ENCODE measurements at regions of chr6 and their contacts with region 1.

Region 1: DNA sequence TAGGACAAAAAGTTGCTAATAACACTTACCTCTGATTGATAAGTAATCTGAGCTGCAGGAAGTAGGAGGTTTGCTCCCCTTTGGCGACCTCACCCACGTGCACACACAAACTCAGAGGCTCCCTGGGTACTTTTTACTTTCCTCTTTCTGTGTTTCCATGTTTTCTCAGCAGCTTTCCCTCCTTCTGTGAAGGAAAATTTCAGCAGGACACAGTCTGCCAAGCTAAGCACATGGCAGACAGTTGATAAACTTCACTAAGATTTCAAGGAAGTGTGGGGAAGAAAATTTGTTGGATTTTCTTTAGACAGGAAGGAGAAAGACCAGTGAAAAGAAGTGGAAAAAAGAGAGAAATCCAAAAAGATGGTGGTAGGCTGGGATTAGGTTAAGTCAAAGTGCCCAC is 215.5 kb upstream of the ARG1 start:
- DNase-seq: no peak
- ATAC-seq: no peak
- H3K4me3 ChIP-seq: no peak overlapping the region
- H3K27ac ChIP-seq: no peak overlapping the region
- H3K4me1 ChIP-seq: no peaks in the 10 kb centered on the region
- H3K27me3 ChIP-seq: no peaks in the 10 kb centered on the region
- CTCF ChIP-seq: no peak

Region 2: DNA sequence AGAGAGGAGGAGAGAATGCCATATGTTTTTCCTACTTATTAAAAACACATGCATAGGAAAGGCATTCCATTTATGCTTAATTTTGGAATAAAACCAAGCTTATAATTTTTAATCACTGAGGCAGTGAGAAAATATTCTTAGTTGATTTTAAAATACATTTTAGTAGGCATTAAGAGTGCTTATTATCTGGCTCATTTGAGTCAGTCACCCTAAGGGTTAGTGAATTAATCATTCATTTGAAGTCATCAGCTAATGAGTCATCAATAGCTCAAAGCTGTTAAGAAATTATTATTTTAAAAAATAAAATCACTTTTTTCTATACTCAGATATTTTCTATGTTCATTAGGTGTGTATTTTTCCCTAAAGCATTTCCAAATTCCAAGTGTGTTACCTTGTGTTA is 910.1 kb before region 1 on chr6:
- CTCF ChIA-PET with region 1: no interaction called
- POLR2A ChIA-PET with region 1: no interaction called
- in situ Hi-C with region 1: no loop called
- intact Hi-C with region 1: no loop called
- DNase-seq: no peak
- ATAC-seq: no peak
- H3K4me3 ChIP-seq: no peak overlapping the region
- H3K27ac ChIP-seq: no peak overlapping the region
- H3K4me1 ChIP-seq: no peaks in the 10 kb centered on the region
- H3K27me3 ChIP-seq: no peaks in the 10 kb centered on the region
- CTCF ChIP-seq: no peak

Region 3: GRCh38 chr6:130602151-130602770 is 755.2 kb before region 1 on chr6:
- CTCF ChIA-PET with region 1: no interaction called
- POLR2A ChIA-PET with region 1: interaction called, 11 read pairs
- in situ Hi-C with region 1: no loop called
- intact Hi-C with region 1: no loop called
- DNase-seq: peak; percentile 67
- ATAC-seq: peak; percentile 84
- H3K4me3 ChIP-seq: no peak overlapping the region
- H3K27ac ChIP-seq: no peak overlapping the region
- H3K4me1 ChIP-seq: no peaks in the 10 kb centered on the region
- H3K27me3 ChIP-seq: no peaks in the 10 kb centered on the region
- CTCF ChIP-seq: no peak

Region 4: DNA sequence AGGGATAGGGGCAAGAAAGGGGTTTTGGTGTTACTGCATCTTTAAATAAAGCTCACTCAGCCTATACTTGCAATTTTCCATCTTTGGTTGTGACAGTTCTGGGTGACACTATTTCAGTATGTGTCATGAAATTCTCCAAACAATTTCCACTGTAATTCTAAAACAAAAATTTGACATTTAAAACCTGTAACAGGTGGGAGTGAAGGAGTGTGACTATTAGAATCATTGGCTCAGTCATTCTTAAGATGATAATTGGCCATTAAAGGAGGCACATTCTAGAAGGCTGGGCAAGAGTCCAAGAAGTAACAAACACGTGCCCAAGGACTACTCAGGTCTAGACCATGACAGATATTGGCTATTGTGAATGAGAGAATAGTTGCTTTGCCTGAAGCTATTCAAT is 62.2 kb after region 1 on chr6:
- CTCF ChIA-PET with region 1: no interaction called
- POLR2A ChIA-PET with region 1: no interaction called
- in situ Hi-C with region 1: no loop called
- intact Hi-C with region 1: no loop called
- DNase-seq: no peak
- ATAC-seq: no peak
- H3K4me3 ChIP-seq: no peak overlapping the region
- H3K27ac ChIP-seq: no peak overlapping the region
- H3K4me1 ChIP-seq: no peaks in the 10 kb centered on the region
- H3K27me3 ChIP-seq: peaks cover 4% of the 10 kb centered on the region; the same call in 1 of the 2 replicates
- CTCF ChIP-seq: no peak

Region 5: DNA sequence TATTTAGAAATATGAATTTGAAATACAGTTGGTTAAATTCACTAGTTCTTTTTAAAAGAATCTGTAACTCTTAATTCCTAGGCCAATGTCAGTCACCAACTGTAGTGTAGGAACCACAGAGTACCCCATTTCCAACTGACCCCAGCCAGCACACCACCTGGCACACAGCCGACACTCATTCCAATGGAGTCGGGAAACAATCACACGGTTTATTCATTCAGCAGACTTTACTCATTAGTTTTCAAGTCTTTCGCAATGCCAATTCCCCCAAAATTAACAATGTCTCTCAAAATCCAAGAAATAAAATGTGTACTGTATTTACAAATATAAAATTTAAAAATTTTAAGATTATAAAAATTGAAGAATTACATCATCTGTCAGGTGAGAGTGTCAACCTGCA is 229.0 kb after region 1 on chr6:
- CTCF ChIA-PET with region 1: no interaction called
- POLR2A ChIA-PET with region 1: no interaction called
- in situ Hi-C with region 1: no loop called
- intact Hi-C with region 1: no loop called
- DNase-seq: no peak
- ATAC-seq: no peak
- H3K4me3 ChIP-seq: no peak overlapping the region
- H3K27ac ChIP-seq: no peak overlapping the region
- H3K4me1 ChIP-seq: no peaks in the 10 kb centered on the region
- H3K27me3 ChIP-seq: no peaks in the 10 kb centered on the region
- CTCF ChIP-seq: no peak